ENCODE measurements at regions of chr1 and their contacts with region 1.

Region 1: GRCh38 chr1:67489643-67490042 is 59.4 kb upstream of the SERBP1 start:
- DNase-seq: no peak

Region 2: DNA sequence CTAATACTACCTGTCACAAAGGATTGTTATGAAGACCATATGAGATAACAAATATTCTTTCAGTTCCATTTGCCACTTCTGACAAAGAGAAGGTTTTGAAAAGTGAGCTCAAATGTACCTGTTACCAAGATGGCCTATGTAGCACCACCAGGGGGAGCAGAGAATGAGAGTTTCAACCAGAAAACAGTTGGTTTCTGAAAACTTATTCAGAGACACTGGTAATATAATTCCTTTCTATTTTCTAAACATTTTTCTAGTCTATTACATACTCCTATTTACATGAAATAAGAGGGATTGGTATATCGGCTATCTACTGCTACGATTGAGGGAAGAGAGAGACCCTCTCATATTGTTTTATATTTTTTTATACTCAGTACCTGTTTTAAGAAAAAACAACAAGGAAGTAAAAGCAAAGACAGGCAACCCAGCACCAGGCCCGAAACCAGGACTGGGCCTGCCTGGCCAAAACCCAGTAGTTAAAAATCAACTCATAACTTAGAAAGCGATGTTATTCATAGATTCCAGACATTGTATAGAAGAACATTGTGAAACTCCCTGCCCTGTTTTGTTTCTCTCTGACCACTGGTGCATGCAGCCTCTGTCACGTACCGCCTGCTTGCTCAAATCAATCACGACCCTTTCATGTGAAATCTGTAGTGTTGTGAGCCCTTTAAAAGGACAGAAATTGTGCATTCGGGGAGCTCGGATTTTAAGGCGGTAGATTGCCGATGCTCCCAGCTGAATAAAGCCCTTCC is 275.0 kb before region 1 on chr1:
- intact Hi-C with region 1: loop called in 1 of 2 experiments (anchors 10 kb)
- DNase-seq: no peak

Region 3: DNA sequence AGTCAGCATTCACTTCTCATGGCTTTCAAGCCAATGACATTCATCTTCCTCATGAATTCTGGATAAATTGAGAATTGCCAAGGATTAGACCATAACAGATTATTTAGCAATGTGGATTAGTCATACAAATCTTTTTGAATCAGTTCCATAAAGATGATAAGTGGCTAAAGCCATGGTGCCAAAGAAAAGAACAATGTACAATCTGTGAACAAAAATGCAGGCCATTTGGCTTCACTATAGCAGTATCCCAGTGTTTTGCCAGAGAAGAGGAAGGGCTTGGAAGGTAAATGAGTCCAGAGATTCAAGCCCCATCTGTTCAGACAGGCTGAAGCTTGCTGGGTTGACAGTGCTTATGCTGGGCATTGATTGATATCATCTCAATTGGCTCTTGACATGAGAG is 1701.7 kb after region 1 on chr1:
- intact Hi-C with region 1: no loop called
- DNase-seq: no peak